Dorsolateral prefrontal cortex (tissue), 120 donors: ENCODE measurements at regions of chr17 and their contacts with region 1.

Region 1: DNA sequence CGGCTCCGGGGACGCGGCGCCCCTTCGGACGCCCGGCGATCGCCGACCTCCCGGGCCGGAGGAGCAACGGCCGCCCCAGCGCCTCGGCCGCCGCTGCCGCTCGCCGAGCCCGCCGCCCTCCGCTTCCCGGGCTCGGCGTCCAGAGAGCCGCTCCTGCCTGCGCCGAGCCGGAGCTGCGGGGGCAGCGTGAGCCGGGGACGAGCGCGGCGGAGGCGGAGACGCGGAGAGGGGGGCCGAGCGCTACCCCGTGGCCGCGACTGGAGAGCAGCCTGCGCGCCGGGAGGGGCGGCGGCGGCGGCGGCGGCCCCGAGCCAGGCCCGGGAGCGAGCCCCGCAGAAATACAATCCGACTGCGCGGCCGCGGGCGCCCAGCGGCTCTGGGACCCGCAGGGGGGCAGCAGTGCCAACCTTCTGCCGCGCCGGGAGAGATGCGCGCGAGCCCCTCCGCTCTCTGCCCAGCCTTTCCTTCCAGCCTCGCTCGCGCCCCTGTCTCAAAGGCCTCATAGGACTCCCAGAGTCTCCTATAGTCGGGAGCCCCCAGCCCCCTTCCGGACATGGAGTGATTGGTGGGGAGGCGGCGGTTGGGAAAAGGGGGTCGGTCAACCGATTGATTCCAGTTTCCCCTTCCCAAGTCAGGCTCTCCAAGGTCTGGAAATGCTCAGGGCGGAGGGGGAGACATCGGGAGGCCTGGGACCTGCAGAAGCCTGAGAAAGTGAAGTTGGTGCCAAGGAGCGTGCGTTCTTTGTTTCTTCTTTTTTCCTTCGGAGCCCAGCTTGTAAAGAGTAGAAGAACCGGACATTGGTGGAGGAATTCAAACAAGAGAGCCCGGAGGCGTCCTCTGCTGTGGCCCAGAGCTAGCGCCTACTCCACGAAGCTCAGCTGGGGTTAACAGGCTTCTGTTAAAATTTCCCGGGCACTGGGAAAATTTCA is 1.1 kb upstream of the SDK2 start:
- DNase-seq: peak; percentile 39 to 86 (median 62)
- H3K4me3 ChIP-seq: peak overlapping the region in 58 of 59 donors; percentile 26 to 80 (median 64)
- H3K27ac ChIP-seq: peak overlapping the region in 42 of 59 donors; percentile 9 to 81 (median 58)
- H3K27me3 ChIP-seq: peaks cover 0 to 16% (median 0%) of the 10 kb centered on the region in 45 donors
- CTCF ChIP-seq: peak in 45 of 56 donors; percentile 8 to 65 (median 39)

Region 2: DNA sequence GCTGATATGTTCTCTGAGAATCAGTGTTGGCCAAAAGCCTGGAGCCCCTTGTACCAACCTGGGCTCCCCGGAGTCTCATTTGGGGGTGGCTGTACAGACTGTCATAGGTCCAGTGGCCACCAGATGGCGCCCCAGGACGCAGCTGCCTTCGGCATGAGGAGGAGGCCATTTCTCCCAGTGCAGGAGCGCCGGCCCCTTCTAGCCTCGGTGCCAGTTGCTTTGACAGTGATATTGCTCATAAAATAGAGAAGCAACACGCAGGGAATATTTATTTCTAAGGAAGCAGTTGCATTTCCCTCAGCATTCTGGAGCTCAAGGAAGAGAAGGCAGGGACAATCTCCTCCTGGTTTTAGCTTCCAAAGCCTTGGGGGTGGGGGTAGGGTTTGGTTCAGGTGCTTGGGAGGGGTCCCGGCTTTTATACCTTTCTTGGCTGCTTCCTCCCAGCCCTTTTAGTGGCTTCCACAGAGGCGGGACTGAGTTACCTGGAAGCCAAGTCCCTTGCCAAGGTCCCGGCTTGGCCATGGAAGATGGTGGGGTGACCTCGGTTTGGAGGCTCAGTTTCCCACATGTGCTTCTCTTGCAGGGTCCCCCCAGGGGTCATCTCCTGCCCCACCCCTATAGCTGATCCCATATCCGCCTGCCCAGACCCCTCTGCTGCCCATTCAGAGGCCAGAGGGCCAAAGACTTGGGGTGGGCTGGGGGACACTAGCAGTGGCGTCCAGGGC is 215.7 kb before region 1 on chr17:
- intact Hi-C with region 1: loop called (anchors 5 to 10 kb)
- DNase-seq: peak; percentile 80 to 90 (median 88)
- H3K4me3 ChIP-seq: peak overlapping the region in 3 of 59 donors; percentile 8 to 31 (median 28)
- H3K27ac ChIP-seq: no peak overlapping the region
- H3K27me3 ChIP-seq: no peaks in the 10 kb centered on the region
- CTCF ChIP-seq: peak; percentile 80 to 100 (median 98)

Region 3: DNA sequence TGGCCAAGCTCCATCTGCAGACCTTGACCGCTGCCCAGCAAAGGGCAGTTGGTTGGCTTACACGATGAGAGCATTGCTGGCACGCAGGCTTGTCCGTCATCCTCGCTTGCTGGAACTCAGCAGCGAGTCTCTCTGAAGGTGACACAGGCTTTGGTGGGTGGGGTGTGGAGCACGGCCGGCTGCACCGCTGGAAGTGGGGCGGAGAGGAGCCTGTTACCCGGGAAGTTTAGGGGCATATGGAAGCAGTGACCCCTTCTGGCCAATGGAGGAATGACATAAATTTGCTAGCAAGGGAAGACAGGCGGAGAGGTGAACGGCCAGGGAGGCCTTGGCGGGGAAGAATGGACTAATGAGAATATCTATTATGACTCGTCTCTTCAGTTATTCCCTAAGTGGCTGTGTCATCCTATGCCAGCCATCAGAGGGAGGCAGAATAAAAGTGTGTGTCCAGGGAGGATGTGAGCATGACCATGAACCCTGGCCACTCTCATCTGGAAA is 64.8 kb after region 1 on chr17:
- intact Hi-C with region 1: loop called (anchors 2 to 5 kb)
- DNase-seq: peak in 6 of 10 donors; percentile 38 to 59 (median 48)
- H3K4me3 ChIP-seq: peak overlapping the region in 1 of 59 donors; percentile 42
- H3K27ac ChIP-seq: no peak overlapping the region
- H3K27me3 ChIP-seq: peaks cover 0 to 25% (median 0%) of the 10 kb centered on the region in 45 donors
- CTCF ChIP-seq: peak; percentile 65 to 93 (median 81)

Region 4: DNA sequence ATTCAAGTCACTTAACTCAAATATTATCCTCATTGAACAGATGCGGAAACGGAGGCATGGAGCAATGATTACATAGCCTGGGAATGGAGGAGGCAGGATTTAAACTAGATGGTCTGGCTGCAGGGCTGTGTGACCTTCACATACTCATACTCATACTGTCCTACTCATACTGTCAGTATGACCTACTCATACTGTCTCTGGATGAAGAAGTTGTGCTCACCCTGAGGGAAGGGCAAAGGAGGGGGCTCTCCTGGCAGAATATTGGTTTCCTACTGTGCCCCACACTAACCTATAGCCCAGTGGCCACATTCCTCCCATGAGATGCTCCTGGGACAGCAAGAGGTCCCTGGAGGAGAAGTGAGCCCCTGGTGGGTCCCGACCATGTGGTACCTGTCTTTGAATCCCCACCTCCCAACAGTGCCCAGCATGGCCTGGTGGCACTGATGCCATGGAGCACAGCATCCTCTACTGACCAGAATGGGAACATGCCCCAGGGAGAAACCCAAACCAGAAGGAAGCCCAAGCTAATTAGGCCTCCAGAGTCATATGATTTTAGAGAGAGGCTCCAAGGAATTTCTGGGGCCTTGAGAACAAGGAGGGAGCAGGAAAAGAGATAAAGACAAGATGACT is 196.2 kb after region 1 on chr17:
- intact Hi-C with region 1: loop called (anchors 5 to 10 kb)
- DNase-seq: no peak
- H3K4me3 ChIP-seq: no peak overlapping the region
- H3K27ac ChIP-seq: no peak overlapping the region
- H3K27me3 ChIP-seq: peaks cover 0 to 6% (median 0%) of the 10 kb centered on the region in 45 donors
- CTCF ChIP-seq: peak in 54 of 56 donors; percentile 22 to 75 (median 54)

Region 5: GRCh38 chr17:74176546-74177001 is 531.3 kb after region 1 on chr17:
- intact Hi-C with region 1: loop called (anchors 2 to 5 kb)
- DNase-seq: peak; percentile 46 to 82 (median 76)
- H3K4me3 ChIP-seq: no peak overlapping the region
- H3K27ac ChIP-seq: peak overlapping the region in 7 of 59 donors; percentile 51 to 62 (median 55)
- H3K27me3 ChIP-seq: peaks cover 0 to 10% (median 0%) of the 10 kb centered on the region in 45 donors
- CTCF ChIP-seq: peak; percentile 46 to 94 (median 83)